A549 (cell line): ENCODE measurements at regions of chr17 and their contacts with region 1.

Region 1: DNA sequence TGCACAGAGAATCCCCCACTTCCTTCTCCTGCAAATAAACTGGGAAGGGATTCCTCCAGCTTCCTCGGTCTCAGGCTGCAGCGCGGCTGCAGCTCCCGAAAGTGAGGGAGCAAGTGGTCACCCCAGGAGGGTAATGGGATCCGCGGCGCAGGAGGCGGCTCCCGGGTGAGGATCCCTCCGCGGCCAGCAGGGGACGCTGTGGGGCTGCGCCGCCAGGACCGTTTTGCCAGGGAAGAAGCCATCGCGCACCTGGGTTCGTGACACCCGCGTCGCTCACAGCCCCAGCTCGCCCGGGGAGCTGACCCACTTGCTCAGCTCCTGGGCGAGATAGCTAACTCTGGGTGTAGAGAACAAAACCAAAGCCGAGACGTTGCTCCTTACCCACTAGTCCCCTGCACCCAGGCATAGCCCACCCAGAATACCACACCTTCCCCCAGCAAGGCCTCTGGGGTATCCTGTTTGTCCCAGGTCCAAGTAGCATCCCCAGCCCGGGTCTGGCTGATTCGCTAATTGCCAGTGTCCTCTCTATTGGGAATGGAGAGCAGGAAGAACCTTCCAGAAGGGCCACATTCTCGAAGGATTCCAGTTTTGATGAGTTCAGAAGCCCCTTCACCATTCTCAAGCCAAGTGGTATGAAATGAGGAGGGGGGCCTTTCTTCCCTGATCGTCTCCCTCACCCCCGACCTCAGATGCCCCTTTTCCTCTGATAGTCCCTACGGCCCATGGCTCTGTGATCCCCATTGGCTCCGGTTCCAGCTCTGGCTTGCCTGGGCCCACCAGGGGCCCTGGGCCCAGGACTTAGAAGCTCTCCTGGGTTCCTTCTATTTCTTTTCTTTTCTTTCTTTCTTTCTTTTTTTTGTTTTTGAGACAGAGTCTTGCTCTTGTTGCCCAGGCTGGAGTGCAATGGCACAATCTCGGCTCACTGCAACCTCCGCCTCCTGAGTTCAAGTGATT is 14.1 kb downstream of the CYGB start:
- DNase-seq: peak; percentile 75 to 93
- ATAC-seq: peak; percentile 79 to 88
- H3K4me3 ChIP-seq: no peak overlapping the region
- H3K27ac ChIP-seq: peak overlapping the region in 1 of 2 experiments; percentile 47; a peak in 1 of 6 replicates
- H3K4me1 ChIP-seq: peaks cover 20% of the 10 kb centered on the region
- CTCF ChIP-seq: peak; percentile 100
- EP300 ChIP-seq: no peak
- POLR2A ChIP-seq: no peak
- RAD21 ChIP-seq: peak; percentile 97 to 99

Region 2: DNA sequence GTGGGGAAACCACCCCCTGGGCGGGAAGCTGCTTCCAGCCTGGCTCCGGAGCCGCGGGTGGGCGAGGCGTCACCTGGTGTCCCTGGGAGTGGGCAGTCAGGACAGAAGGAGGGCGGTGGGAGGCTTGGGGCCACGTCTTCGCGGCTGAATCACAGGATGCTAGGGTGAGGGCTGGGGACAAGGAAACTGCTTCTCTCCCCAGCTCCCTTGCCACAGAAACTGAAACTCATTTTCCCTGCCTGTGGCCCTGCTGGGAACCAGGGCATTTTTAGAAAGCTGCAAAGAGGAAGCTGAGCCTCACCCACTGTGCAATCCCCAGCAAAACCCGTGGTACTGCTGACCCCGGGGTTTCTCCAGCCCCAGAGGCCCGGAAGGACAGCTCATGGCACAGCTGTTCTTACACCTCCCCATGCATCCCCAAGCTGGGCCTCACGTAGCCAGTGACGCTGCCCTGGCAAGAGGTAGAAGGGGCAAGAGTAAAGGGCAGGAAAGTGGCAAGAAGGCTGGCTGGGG is 30.3 kb before region 1 on chr17:
- CTCF ChIA-PET with region 1: interaction called, 32 read pairs
- POLR2A ChIA-PET with region 1: no interaction called
- DNase-seq: no peak
- ATAC-seq: no peak
- H3K4me3 ChIP-seq: no peak overlapping the region
- H3K27ac ChIP-seq: peak overlapping the region in 1 of 2 experiments; percentile 62; a peak in 3 of 6 replicates
- H3K4me1 ChIP-seq: peaks cover 29% of the 10 kb centered on the region
- CTCF ChIP-seq: no peak
- EP300 ChIP-seq: no peak
- POLR2A ChIP-seq: no peak
- RAD21 ChIP-seq: no peak

Region 3: GRCh38 chr17:76547184-76547641 is 23.9 kb after region 1 on chr17:
- CTCF ChIA-PET with region 1: interaction called, 362 read pairs
- POLR2A ChIA-PET with region 1: no interaction called
- DNase-seq: peak; percentile 72 to 74
- ATAC-seq: peak; percentile 66 to 89
- H3K4me3 ChIP-seq: no peak overlapping the region
- H3K27ac ChIP-seq: peak overlapping the region in 1 of 2 experiments; percentile 49; a peak in 4 of 6 replicates
- H3K4me1 ChIP-seq: peaks cover 36% of the 10 kb centered on the region
- CTCF ChIP-seq: peak; percentile 80
- EP300 ChIP-seq: no peak
- POLR2A ChIP-seq: no peak
- RAD21 ChIP-seq: peak; percentile 86 to 95

Region 4: GRCh38 chr17:76585818-76586593 is 62.6 kb after region 1 on chr17 and contains the start of gene ST6GALNAC2:
- CTCF ChIA-PET with region 1: interaction called, 50 read pairs
- POLR2A ChIA-PET with region 1: no interaction called
- DNase-seq: peak; percentile 59 to 70
- ATAC-seq: peak; percentile 84 to 92
- H3K4me3 ChIP-seq: peak within 1 kb of the TSS; percentile 64
- H3K27ac ChIP-seq: peak within 1 kb of the TSS; percentile 76 to 89
- H3K4me1 ChIP-seq: 0 out of 3 replicates have a peak, but pooled peaks cover 3% of the 10 kb centered on the region
- CTCF ChIP-seq: peak; percentile 25; the same call in 2 of the 3 replicates
- EP300 ChIP-seq: no peak
- POLR2A ChIP-seq: no peak
- RAD21 ChIP-seq: peak; percentile 33 to 59; a peak in 4 of 5 replicates
- polyA plus RNA-seq, gene ST6GALNAC2: 0.74 and 0.78 TPM in 2 replicates

Region 5: DNA sequence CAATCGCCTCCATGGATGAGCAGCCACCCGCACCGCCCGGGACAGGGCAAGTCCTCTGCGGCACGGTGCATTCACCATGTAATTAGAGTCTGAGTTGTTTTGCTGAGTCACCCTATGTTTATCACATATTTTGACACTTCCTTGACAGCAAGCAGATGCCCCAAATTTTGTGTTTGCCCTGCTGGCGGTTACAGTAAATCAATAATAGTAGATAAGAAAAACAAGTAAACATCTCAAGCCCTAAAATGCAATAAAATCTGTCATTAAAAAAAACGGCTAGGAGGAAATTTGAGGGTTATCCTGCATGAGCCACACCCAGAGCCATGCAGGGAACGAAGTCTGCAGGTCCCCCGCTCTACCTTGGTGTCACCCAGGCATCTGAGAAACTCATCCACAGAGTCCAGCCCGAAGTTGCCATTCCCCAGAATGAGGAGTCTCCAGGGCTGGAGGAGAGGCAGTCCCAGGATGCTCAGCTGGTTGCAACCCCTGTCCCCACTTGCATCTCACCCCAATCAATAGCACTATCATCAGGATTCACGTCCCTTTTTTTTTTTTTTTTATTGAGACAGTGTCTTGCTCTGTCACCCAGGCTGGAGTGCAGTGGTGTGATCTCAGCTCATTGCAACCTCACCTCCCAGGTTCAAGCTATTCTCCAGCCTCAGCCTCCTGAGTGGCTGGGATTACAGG is 136.7 kb after region 1 on chr17:
- CTCF ChIA-PET with region 1: interaction called, 17 read pairs
- POLR2A ChIA-PET with region 1: no interaction called
- DNase-seq: peak in 1 of 2 experiments; percentile 59
- ATAC-seq: peak; percentile 17 to 80; a peak in 4 of 6 replicates
- H3K4me3 ChIP-seq: no peak overlapping the region
- H3K27ac ChIP-seq: peak overlapping the region; percentile 34 to 74
- H3K4me1 ChIP-seq: peaks cover 18% of the 10 kb centered on the region
- CTCF ChIP-seq: no peak
- EP300 ChIP-seq: no peak
- POLR2A ChIP-seq: no peak
- RAD21 ChIP-seq: no peak

Region 6: GRCh38 chr17:76709077-76709950 is 186.0 kb after region 1 on chr17:
- CTCF ChIA-PET with region 1: interaction called, 192 read pairs
- POLR2A ChIA-PET with region 1: no interaction called
- DNase-seq: peak in 1 of 2 experiments; percentile 29
- ATAC-seq: peak; percentile 1 to 45; a peak in 3 of 6 replicates
- H3K4me3 ChIP-seq: peak overlapping the region; percentile 60
- H3K27ac ChIP-seq: peak overlapping the region; percentile 73 to 88; a peak in 5 of 6 replicates
- H3K4me1 ChIP-seq: peaks cover 22% of the 10 kb centered on the region
- CTCF ChIP-seq: no peak
- EP300 ChIP-seq: no peak
- POLR2A ChIP-seq: peak; percentile 5; the same call in 1 of the 2 replicates
- RAD21 ChIP-seq: no peak